HEK293 (cell line): ENCODE measurements at regions of chr20 and their contacts with region 1.

Region 1: DNA sequence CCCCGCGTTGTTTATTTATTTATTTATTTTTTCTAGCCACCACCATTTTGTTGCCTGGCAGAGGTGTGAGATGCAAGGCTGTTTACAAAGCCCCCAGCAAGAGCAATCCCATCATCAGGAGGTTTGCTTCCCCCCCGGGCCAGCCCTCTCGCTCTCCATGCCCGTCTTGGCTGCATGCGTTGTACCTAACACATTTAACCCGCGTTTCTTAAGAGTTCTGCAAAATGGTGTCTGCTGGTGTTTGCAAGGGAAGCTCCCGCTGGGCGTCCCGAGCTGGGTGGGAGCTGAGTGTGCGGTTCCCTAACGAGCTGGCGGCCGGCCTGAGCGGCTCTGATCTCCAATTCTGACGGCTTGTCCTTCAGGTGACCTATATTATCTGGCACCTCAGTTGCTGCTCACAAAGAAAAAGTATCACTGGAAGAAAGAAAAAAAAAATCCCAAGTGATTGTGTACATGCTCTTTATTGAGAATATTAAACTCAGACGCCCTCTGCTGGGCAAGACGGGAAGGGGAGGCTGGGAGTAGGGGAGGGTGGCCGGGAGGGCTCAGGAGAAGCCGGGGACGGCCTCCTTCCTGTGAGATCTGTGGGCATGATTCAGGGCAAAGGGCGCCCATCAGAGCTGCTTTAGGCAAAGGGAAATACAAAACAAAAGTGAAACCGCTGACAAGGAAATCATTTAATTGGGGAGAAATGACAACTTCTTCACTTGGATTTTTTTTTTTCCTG is 154.8 kb downstream of the BCAS1 start:
- H3K4me3 ChIP-seq: peak overlapping the region; percentile 58
- H3K27ac ChIP-seq: peak overlapping the region; percentile 78; the same call in 1 of the 2 replicates
- H3K4me1 ChIP-seq: 0 out of 2 replicates have a peak, but pooled peaks cover 5% of the 10 kb centered on the region
- CTCF ChIP-seq: peak; percentile 84

Region 2: DNA sequence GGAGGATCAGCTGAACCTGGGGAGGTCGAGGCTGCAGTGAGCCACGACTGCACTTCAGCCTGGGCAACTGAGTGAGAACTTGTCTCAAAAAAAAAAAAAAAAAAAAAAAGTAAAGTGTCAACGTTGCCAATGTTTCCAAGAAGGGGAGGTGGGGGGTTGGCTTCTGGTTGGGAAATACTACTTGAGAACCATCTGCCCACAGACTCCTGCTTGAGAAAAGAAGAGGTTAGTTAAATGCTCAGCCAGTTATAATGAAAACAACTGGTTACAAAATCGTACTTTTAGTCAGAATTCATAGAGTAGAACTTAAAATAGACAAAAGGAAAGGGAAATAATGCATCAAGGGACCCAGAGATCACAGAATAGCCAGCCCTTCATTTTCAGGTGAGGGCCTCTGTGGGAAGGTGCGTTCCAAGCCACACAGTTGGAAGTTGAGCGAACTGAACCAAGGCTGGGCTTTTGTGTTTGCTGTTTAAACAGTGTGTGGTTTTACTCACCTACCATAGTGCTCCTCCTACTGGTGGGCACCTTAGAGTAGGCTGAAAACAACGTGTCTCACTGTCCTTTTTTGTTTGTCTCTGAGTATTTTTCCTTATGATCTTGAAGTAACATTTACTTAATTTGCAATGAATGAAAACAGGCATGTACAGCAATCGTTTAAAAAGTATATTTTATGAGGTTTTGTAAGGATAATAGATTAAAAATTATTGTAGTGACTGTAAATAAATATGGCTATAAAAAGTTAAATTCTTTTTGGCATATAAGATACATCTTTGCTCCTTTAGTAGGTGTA is 45.9 kb before region 1 on chr20:
- CTCF ChIA-PET with region 1: interaction called, 11 read pairs
- POLR2A ChIA-PET with region 1: interaction called, 3 read pairs
- H3K4me3 ChIP-seq: no peak overlapping the region
- H3K27ac ChIP-seq: 0 out of 2 replicates have a peak overlapping the region, but pooled peaks have one; percentile 40
- H3K4me1 ChIP-seq: peaks cover 21% of the 10 kb centered on the region
- CTCF ChIP-seq: peak; percentile 56; the same call in 1 of the 2 replicates

Region 3: GRCh38 chr20:53926428-53927028 is 10.9 kb after region 1 on chr20:
- CTCF ChIA-PET with region 1: interaction called, 14 read pairs
- POLR2A ChIA-PET with region 1: interaction called, 3 read pairs
- H3K4me3 ChIP-seq: no peak overlapping the region
- H3K27ac ChIP-seq: no peak overlapping the region
- H3K4me1 ChIP-seq: no peaks in the 10 kb centered on the region; the same call in 1 of the 2 replicates
- CTCF ChIP-seq: no peak

Region 4: DNA sequence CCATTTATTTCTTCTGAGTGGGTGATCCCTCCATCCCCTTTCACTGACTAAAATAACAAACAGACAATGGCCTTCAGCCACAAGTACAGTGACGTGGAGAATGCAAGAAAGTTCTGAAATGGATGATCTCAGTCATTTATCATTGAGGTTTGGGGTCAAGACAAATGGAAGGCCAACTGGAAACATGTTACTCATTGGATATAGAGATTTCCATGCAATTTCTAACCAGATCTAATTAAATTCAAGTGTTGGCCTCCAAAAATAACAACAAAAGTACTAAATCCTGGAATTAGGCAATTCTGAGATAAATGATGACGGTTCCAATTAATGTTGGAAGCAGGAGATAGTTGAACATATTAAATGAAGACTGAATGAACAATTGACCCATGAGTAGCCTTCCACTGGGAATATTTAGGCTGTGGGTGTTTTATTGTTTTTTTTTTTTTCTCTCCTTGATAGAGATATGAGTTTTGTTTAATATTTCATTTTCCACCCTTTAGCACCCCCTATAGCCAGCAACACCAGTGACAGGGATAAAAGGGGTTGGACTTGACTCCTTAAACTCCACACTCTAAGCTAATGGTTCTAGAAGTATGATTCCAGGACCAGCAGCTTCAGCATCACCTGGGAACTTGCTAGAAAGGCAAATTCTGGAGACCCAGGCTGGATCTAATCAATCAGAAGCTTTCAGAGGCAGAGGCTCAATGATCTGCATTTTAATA is 42.0 kb after region 1 on chr20:
- CTCF ChIA-PET with region 1: no interaction called
- POLR2A ChIA-PET with region 1: no interaction called
- H3K4me3 ChIP-seq: no peak overlapping the region
- H3K27ac ChIP-seq: no peak overlapping the region
- H3K4me1 ChIP-seq: no peaks in the 10 kb centered on the region
- CTCF ChIP-seq: no peak

Region 5: DNA sequence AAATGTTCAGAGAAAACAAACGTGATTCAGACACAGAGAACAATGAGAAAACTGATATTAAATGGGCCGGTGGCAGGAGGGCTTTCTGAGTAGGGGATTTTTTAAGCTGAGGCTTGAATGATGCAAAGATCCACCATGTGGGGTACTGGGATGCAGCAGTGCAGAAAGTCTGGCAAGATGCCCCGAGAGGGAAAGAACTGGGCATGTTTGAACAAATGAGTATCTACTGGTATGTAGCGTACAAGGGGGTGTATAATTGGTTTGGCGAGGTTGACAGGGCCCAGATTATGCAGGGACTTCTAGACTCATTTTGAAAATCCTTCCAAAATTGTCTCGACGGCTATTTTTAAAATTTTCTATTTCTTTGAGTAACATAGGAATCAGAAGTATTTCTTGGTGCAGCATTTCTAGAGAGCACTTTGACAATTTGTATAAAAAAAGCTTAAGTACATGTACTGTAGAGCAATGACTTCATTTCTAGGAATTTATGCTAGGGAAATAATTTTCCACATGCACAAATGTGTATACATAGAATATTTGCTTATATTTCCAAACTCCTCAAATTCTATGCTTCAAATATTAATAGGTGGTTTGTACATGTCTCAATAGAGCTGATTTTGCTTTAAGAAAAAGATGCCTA is 440.2 kb after region 1 on chr20:
- CTCF ChIA-PET with region 1: no interaction called
- POLR2A ChIA-PET with region 1: no interaction called
- H3K4me3 ChIP-seq: no peak overlapping the region
- H3K27ac ChIP-seq: no peak overlapping the region
- H3K4me1 ChIP-seq: no peaks in the 10 kb centered on the region
- CTCF ChIP-seq: no peak